ENCODE measurements at regions of chr17 and their contacts with region 1.

Region 1: DNA sequence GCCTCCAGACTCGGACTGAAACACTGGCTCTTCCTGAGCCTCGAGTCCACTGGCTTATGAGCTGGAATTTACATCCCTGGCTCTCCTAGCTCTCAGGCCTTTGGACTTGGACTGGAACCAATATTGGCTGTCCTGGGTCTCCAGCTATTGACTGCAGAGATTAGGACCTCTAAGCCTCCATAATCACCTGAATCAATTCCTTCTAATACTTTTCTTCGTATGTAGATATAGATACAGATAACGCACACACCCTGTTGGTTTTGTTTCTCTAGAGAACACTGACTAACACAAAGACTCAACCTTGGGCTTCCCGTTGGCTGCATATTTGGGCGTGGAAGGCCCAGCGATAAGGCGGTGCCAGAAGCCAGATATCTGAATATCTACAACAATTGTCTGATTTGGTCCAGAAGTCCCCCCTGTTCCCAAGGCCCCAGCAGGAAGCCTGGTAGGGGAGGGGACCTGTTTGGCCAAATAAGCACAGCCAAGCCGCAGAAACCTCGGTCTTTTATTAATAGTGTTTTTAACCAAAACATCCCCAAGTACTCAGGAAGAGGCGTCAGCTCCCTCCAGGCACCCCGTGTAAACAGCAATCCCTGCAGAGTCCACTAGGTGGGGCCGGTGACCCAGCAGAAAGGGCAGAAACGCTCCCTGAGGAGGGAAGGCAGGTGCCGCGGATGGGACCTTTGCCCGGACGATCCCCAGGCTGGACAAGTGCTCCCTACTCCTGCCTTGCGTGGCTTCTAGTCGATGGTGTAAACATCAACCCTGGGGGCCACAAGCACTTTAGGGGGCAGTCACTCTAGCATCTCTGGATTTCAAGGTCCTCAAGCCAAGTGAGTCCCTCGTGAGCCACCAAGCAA is 57.0 kb downstream of the ABR start:
- DNase-seq: peak; percentile 46 to 87
- H3K4me3 ChIP-seq: no peak overlapping the region
- H3K27ac ChIP-seq: no peak overlapping the region
- H3K4me1 ChIP-seq: 0 out of 2 replicates have a peak, but pooled peaks cover 10% of the 10 kb centered on the region
- H3K27me3 ChIP-seq: no peaks in the 10 kb centered on the region
- CTCF ChIP-seq: peak; percentile 96

Region 2: GRCh38 chr17:1108861-1109605 is 13.7 kb before region 1 on chr17:
- CTCF ChIA-PET with region 1: interaction called, 11 read pairs
- POLR2A ChIA-PET with region 1: interaction called, 5 read pairs
- intact Hi-C with region 1: no loop called
- DNase-seq: peak in 1 of 2 experiments; percentile 49
- H3K4me3 ChIP-seq: peak overlapping the region; percentile 89
- H3K27ac ChIP-seq: peak overlapping the region; percentile 97
- H3K4me1 ChIP-seq: peaks cover 46% of the 10 kb centered on the region
- H3K27me3 ChIP-seq: no peaks in the 10 kb centered on the region
- CTCF ChIP-seq: no peak

Region 3: GRCh38 chr17:1137465-1137894 is 14.7 kb after region 1 on chr17:
- CTCF ChIA-PET with region 1: no interaction called
- POLR2A ChIA-PET with region 1: no interaction called
- intact Hi-C with region 1: no loop called
- DNase-seq: no peak
- H3K4me3 ChIP-seq: no peak overlapping the region
- H3K27ac ChIP-seq: no peak overlapping the region
- H3K4me1 ChIP-seq: no peaks in the 10 kb centered on the region
- H3K27me3 ChIP-seq: no peaks in the 10 kb centered on the region
- CTCF ChIP-seq: no peak

Region 4: DNA sequence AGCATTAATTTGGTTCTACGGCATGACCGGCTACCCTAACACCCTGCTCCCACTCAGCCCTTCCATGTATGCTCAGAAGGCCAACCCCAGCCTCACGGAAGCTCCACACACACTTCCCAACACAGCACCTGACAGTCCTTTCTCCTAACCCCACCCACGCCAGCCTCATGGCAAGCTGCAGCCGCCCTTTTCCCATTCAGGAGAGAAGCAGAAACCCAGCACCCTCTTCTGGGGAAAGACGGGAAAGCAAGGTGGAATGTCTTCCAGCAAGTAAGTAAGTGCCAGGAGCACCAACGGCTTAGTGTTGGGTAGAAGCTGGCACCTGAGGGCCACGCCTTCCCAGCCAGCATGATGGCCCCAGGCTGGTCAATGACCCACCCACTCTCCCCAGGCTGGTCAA is 24.9 kb after region 1 on chr17:
- CTCF ChIA-PET with region 1: interaction called, 11 read pairs
- POLR2A ChIA-PET with region 1: no interaction called
- intact Hi-C with region 1: no loop called
- DNase-seq: peak; percentile 69 to 80
- H3K4me3 ChIP-seq: no peak overlapping the region
- H3K27ac ChIP-seq: no peak overlapping the region
- H3K4me1 ChIP-seq: no peaks in the 10 kb centered on the region
- H3K27me3 ChIP-seq: no peaks in the 10 kb centered on the region
- CTCF ChIP-seq: peak; percentile 79

Region 5: GRCh38 chr17:1186923-1187771 is 64.4 kb after region 1 on chr17:
- CTCF ChIA-PET with region 1: interaction called, 11 read pairs
- POLR2A ChIA-PET with region 1: no interaction called
- intact Hi-C with region 1: loop called (anchors 1 kb)
- DNase-seq: peak; percentile 63 to 87
- H3K4me3 ChIP-seq: no peak overlapping the region
- H3K27ac ChIP-seq: no peak overlapping the region
- H3K4me1 ChIP-seq: no peaks in the 10 kb centered on the region
- H3K27me3 ChIP-seq: peaks cover 14% of the 10 kb centered on the region; the same call in 1 of the 2 replicates
- CTCF ChIP-seq: peak; percentile 98

Region 6: DNA sequence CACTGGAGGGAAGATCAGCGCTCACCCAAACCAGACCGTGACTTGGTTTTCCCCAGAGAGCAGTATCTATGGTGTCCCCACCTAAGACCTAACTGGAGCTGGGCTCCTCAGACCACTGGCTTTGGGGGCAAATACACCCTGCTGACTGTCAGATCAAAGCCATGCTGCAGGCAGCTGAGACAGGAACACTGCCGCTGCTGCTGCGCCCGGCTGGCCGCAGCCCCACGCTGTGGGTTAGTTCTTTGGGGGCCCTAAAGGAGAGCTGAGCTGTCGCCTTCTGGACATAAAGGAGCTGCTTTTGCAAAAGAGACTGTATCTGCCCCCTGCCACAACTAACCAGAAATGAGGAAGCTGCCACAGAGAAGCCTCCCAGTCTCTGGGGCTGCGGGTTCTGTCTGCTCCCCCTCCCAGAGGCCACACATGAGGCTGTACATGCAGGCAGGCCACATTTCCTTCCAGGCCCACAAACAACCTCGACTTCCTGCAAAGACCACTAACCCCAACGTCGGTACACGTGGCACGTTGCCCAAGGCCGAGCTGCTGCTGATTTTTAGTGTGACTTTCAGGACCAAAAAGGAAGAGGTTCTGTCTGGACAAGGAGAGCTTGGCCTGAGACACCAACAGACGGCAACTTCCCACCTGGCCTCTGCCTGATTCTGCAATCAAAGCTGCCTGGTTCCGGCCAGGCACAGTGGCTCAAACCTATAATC is 75.2 kb after region 1 on chr17:
- CTCF ChIA-PET with region 1: no interaction called
- POLR2A ChIA-PET with region 1: no interaction called
- intact Hi-C with region 1: no loop called
- DNase-seq: no peak
- H3K4me3 ChIP-seq: no peak overlapping the region
- H3K27ac ChIP-seq: no peak overlapping the region
- H3K4me1 ChIP-seq: no peaks in the 10 kb centered on the region
- H3K27me3 ChIP-seq: no peaks in the 10 kb centered on the region
- CTCF ChIP-seq: no peak

Region 7: DNA sequence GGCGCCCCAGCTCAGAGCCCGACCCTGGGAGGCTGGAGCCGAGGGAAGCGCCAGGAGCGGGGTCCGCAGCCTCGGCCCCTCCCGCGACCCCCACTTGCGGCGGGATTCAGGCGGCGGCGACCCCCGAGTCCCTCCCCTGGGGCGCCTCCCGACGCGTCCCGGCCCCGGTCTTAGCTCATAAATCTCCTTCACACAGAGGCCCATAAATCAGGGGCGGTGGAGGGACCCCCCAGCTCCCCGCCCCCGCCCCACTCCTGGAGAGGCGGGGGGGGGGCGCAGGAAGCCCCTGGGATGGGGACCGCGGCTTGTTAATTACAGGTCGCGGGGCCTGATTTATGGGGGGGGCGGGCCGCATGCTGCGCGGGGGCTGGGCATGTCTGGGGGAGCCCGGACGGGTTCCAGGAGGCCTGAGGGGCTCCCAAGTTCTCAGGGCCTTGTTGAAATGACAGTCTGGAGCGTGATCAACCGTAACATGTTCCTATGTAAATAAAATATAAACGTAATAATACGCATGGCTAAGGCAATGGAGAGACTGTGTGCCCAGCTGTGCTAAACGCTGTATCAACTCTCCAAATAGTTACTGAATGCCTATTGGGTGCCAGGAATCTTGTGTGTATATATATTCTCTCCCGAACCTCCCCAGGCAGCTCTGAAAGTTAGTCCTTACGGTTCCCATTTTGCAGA is 137.5 kb after region 1 on chr17:
- CTCF ChIA-PET with region 1: no interaction called
- POLR2A ChIA-PET with region 1: no interaction called
- intact Hi-C with region 1: loop called (anchors 5 kb)
- DNase-seq: no peak
- H3K4me3 ChIP-seq: peak overlapping the region; percentile 58; the same call in 1 of the 2 replicates
- H3K27ac ChIP-seq: no peak overlapping the region
- H3K4me1 ChIP-seq: peaks cover 10% of the 10 kb centered on the region; the same call in 1 of the 2 replicates
- H3K27me3 ChIP-seq: peaks cover 5% of the 10 kb centered on the region; the same call in 1 of the 2 replicates
- CTCF ChIP-seq: no peak

Region 8: DNA sequence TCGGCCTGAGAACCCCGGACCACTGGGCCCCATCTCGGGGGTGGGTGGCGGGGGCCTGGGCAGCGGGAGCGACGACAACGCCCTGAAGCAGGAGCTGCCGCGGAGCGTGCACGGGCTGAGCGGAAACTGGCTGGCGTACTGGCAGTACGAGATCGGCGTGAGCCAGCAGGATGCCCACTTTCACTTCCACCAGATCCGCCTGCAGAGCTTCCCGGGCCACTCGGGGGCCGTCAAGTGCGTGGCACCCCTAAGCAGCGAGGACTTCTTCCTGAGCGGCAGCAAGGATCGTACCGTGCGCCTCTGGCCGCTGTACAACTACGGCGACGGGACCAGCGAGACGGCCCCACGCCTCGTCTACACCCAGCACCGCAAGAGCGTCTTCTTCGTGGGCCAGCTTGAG is 611.0 kb after region 1 on chr17:
- CTCF ChIA-PET with region 1: interaction called, 13 read pairs
- POLR2A ChIA-PET with region 1: no interaction called
- intact Hi-C with region 1: no loop called
- DNase-seq: no peak
- H3K4me3 ChIP-seq: no peak overlapping the region
- H3K27ac ChIP-seq: no peak overlapping the region
- H3K4me1 ChIP-seq: no peaks in the 10 kb centered on the region
- H3K27me3 ChIP-seq: no peaks in the 10 kb centered on the region
- CTCF ChIP-seq: no peak